ENCODE measurements at regions of chr12 and their contacts with region 1.

Region 1: GRCh38 chr12:43882578-43883178 is 46.8 kb downstream of the TMEM117 start:
- DNase-seq: peak in 9 of 14 experiments; percentile 4 to 75 (median 19)
- ATAC-seq: peak; percentile 88
- H3K4me3 ChIP-seq: no peak overlapping the region
- H3K4me3 Mint-ChIP-seq: no peak overlapping the region
- H3K27ac ChIP-seq: no peak overlapping the region
- H3K27ac Mint-ChIP-seq: no peak overlapping the region
- H3K4me1 ChIP-seq: no peaks in the 10 kb centered on the region
- H3K4me1 Mint-ChIP-seq: no peaks in the 10 kb centered on the region
- H3K27me3 ChIP-seq: no peaks in the 10 kb centered on the region
- H3K27me3 Mint-ChIP-seq: no peaks in the 10 kb centered on the region
- CTCF ChIP-seq: peak; percentile 86

Region 2: DNA sequence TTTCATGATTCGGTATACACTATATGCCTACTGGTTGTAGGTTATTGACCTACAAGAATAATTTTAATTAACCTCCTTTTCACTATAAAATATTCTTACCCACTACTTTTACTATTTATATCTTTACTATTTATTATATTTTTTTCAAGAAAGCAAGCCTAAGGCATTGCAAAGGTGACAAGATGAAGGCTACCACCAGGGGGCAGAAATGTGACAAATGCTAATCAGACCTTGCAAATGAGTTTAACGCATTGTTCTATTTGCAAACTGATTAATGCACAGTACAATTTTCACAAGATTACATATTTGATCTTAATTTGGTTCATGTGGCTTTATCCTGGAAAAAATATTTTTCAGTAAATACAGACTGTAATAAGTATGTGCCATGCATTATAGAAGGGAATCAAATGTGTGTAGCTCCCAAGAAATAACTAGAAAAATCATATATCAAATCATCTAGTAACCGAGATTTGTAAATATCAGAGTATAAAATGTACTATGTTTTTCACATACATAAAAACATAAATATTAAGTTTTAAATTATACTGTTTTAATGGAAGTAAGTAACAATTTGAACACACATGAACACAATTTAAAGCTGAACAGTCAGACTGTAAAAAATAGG is 437.6 kb before region 1 on chr12:
- CTCF ChIA-PET with region 1: interaction called, 6 read pairs
- POLR2A ChIA-PET with region 1: no interaction called
- intact Hi-C with region 1: loop called in 1 of 2 experiments (anchors 1 kb)
- DNase-seq: peak; percentile 10 to 64 (median 25)
- ATAC-seq: no peak
- H3K4me3 ChIP-seq: no peak overlapping the region
- H3K4me3 Mint-ChIP-seq: no peak overlapping the region
- H3K27ac ChIP-seq: no peak overlapping the region
- H3K27ac Mint-ChIP-seq: no peak overlapping the region
- H3K4me1 ChIP-seq: no peaks in the 10 kb centered on the region
- H3K4me1 Mint-ChIP-seq: no peaks in the 10 kb centered on the region
- H3K27me3 ChIP-seq: no peaks in the 10 kb centered on the region
- H3K27me3 Mint-ChIP-seq: no peaks in the 10 kb centered on the region
- CTCF ChIP-seq: peak; percentile 73

Region 3: GRCh38 chr12:43758728-43759563 is 123.7 kb before region 1 on chr12 and contains the starts of genes IRAK4 and PUS7L:
- CTCF ChIA-PET with region 1: interaction called, 11 read pairs
- POLR2A ChIA-PET with region 1: interaction called, 12 read pairs
- intact Hi-C with region 1: loop called in 1 of 2 experiments (anchors 5 kb)
- DNase-seq: peak; percentile 90 to 99 (median 94)
- ATAC-seq: peak; percentile 95
- H3K4me3 ChIP-seq: peak within 1 kb of the TSS; percentile 83
- H3K4me3 Mint-ChIP-seq: peak within 1 kb of the TSS; percentile 98
- H3K27ac ChIP-seq: peak within 1 kb of the TSS; percentile 87 to 94
- H3K27ac Mint-ChIP-seq: peak within 1 kb of the TSS; percentile 100
- H3K4me1 ChIP-seq: peaks cover 33% of the 10 kb centered on the region
- H3K4me1 Mint-ChIP-seq: peaks cover 87% of the 10 kb centered on the region
- H3K27me3 ChIP-seq: no peaks in the 10 kb centered on the region
- H3K27me3 Mint-ChIP-seq: no peaks in the 10 kb centered on the region
- CTCF ChIP-seq: peak; percentile 52
- total RNA-seq, gene IRAK4: 27.3 to 29.0 TPM
- total RNA-seq, gene PUS7L: 10.9 to 15.3 TPM

Region 4: DNA sequence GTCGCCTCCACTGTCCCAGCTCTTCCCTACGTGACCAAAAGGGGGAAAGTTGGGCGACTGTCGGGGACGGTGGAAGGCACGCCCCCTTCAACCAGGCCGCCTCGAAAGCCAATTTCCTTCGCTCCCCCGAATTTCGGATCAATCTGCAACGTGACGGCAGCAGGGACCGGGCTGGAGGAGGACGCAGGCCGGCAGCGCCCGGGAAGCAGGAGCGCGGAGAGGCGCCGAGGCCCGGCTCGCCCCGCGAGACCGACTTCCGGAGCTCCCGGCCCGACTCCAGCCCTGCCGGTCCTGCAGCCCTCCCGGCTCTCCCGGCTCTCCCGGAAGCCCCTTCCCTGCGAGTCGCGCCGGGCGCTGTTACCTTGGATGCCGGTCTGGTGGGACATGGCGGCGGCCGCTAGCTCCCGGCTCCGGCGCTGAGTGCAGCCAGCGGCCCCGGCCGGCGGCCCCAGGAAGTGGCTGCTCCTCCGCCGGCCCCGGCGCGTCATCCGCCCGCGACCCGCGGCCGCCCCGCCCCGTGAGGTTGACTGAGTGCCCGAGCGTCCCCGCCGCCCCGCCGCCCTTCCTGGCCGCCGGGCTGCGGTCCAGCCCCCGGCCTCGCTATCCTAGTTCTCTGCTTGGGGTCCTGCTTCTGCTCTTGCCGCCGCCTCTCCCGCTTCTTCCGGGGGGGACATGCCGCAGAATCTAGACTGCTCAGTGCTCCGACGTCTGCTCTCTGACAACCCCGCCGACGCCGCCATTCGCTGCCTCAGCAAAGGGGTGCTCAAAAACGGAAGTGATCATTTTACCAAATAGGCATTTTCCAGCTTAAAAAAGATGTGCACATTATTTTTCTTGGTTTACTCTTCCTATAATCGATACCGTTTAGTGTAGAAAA is 76.6 kb before region 1 on chr12 and contains the start of gene TWF1:
- CTCF ChIA-PET with region 1: interaction called, 16 read pairs
- POLR2A ChIA-PET with region 1: interaction called, 11 read pairs
- intact Hi-C with region 1: no loop called
- DNase-seq: peak; percentile 66 to 92 (median 80)
- ATAC-seq: peak; percentile 78
- H3K4me3 ChIP-seq: peak within 1 kb of the TSS; percentile 89
- H3K4me3 Mint-ChIP-seq: peak within 1 kb of the TSS; percentile 100
- H3K27ac ChIP-seq: peak within 1 kb of the TSS; percentile 87 to 94
- H3K27ac Mint-ChIP-seq: peak within 1 kb of the TSS; percentile 97
- H3K4me1 ChIP-seq: no peaks in the 10 kb centered on the region
- H3K4me1 Mint-ChIP-seq: peaks cover 48% of the 10 kb centered on the region
- H3K27me3 ChIP-seq: no peaks in the 10 kb centered on the region
- H3K27me3 Mint-ChIP-seq: no peaks in the 10 kb centered on the region
- CTCF ChIP-seq: no peak
- total RNA-seq, gene TWF1: 72.3 to 77.5 TPM